PC-3 (cell line): ENCODE measurements at regions of chr6 and their contacts with region 1.

Region 1: DNA sequence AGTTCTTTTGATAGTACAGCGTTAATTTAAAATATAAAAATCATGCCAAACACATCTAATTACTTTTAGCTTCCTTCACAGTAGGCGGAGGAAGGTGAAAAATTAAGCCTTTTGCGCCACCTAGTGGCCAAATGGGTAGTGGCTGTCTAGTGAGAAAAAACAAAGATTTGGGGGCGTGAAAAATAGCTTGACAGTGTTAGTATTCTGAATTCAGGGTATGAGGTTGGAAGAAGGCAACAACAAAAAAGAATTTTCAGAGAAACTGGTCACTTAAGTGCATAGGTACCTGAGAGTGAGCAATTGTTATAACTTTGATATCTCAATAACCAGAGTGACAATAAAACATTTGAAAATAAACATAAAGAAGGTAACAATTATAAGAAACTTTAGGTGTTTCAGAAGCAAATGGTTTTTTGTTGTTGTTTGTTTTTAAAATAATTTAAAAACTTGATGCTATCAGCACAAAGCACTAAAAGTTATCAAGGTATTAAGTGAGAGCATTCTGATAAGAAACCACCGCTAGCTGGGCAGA is 14.3 kb downstream of the PSMB9 start:
- DNase-seq: peak; percentile 87
- ATAC-seq: peak; percentile 71
- H3K4me3 ChIP-seq: no peak overlapping the region
- H3K27ac ChIP-seq: no peak overlapping the region
- H3K4me1 ChIP-seq: no peaks in the 10 kb centered on the region
- H3K27me3 ChIP-seq: peaks cover 14% of the 10 kb centered on the region
- CTCF ChIP-seq: peak; percentile 97

Region 2: GRCh38 chr6:32807020-32807580 is 61.2 kb before region 1 on chr6:
- CTCF ChIA-PET with region 1: no interaction called
- POLR2A ChIA-PET with region 1: no interaction called
- intact Hi-C with region 1: no loop called
- DNase-seq: no peak
- ATAC-seq: no peak
- H3K4me3 ChIP-seq: no peak overlapping the region
- H3K27ac ChIP-seq: no peak overlapping the region
- H3K4me1 ChIP-seq: no peaks in the 10 kb centered on the region; the same call in 1 of the 2 replicates
- H3K27me3 ChIP-seq: peaks cover 32% of the 10 kb centered on the region
- CTCF ChIP-seq: no peak

Region 3: DNA sequence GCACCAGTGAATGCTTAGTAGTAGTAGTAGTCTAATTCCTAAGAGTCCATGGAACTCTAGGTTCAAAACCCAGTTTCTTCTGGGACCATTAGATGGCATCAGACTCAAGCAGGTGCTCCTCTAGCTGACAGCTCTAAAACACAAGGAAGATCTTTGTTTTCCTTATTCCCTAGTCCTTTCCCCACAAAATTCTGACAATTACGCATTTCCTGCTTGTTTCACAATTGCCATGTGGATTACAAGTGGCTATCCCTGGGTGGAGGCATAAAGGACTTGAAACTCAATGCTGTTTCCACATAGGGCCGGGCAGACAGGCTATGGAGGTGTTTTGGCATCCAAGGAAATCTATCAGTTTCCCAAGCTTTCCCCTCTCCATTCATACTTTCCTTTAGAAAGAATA is 42.4 kb before region 1 on chr6:
- CTCF ChIA-PET with region 1: interaction called, 15 read pairs
- POLR2A ChIA-PET with region 1: no interaction called
- intact Hi-C with region 1: loop called (anchors 1 kb)
- DNase-seq: peak; percentile 54
- ATAC-seq: peak; percentile 77
- H3K4me3 ChIP-seq: no peak overlapping the region
- H3K27ac ChIP-seq: no peak overlapping the region
- H3K4me1 ChIP-seq: no peaks in the 10 kb centered on the region
- H3K27me3 ChIP-seq: no peaks in the 10 kb centered on the region
- CTCF ChIP-seq: peak; percentile 60

Region 4: GRCh38 chr6:32853541-32854375 is 14.6 kb before region 1 on chr6 and contains the starts of genes PSMB9 and TAP1:
- CTCF ChIA-PET with region 1: interaction called, 19 read pairs
- POLR2A ChIA-PET with region 1: interaction called, 3 read pairs
- intact Hi-C with region 1: no loop called
- DNase-seq: peak; percentile 95
- ATAC-seq: peak; percentile 87
- H3K4me3 ChIP-seq: peak within 1 kb of the TSS; percentile 83
- H3K27ac ChIP-seq: peak within 1 kb of the TSS; percentile 72
- H3K4me1 ChIP-seq: peaks cover 7% of the 10 kb centered on the region
- H3K27me3 ChIP-seq: no peaks in the 10 kb centered on the region
- CTCF ChIP-seq: peak; percentile 75
- total RNA-seq, gene PSMB9: 0.40 and 1.5 TPM in 2 replicates
- total RNA-seq, gene TAP1: 15.8 and 19.4 TPM in 2 replicates

Region 5: DNA sequence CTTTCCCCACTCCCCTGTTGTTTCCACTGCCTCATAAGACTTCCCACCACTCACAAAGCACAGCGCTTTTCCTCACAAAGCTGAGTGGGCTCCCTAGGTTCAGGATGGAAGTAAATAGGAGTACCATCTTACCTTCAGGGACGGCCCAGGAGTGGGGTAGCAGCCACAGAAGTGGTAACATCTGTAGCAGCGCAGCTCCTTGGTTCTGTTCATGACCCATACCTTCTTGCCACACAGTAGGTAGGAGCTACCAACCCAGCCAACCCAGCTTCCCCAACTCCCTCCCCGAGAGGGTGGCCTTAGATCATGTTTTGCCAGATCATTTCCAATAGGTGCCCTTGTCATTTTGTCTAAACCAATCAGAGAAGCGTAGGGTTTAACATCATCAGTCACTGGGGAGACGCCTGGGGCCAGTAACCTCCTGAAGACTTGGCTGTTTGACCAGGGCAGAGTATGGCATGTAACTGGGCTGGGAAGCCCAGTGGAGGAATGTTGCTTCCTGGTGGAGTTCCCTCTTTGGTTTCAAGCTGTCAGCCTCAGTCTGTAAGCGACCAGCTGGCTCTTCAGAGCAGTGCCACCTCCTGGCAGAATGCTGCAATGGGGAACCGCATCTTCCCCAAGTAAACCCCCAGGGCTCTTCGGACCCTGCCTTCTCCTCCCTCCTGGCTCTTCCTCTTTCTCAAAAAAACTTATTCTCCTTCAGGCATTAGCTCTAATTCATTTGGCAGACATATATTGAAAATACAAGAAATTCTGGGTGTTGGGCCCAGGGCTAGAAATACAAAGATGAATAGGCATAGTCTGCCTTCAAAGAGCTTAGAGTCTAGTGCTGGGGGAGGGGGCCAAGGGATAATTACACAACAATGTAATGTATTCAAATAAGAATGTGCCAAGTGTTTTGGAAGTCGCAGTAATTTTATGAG is 84.8 kb after region 1 on chr6 and contains the start of gene HLA-DMA:
- CTCF ChIA-PET with region 1: interaction called, 11 read pairs
- POLR2A ChIA-PET with region 1: no interaction called
- intact Hi-C with region 1: no loop called
- DNase-seq: peak; percentile 96
- ATAC-seq: peak; percentile 97
- H3K4me3 ChIP-seq: no peak within 1 kb of the TSS
- H3K27ac ChIP-seq: no peak within 1 kb of the TSS
- H3K4me1 ChIP-seq: no peaks in the 10 kb centered on the region; the same call in 1 of the 2 replicates
- H3K27me3 ChIP-seq: no peaks in the 10 kb centered on the region
- CTCF ChIP-seq: peak; percentile 79
- total RNA-seq, gene HLA-DMA: 1.7 and 3.0 TPM in 2 replicates